GM13976 (cell line): ENCODE measurements at regions of chr10 and their contacts with region 1.

Region 1: GRCh38 chr10:72331601-72332422 is 22.9 kb downstream of the DNAJB12 start:
- DNase-seq: peak; percentile 69
- CTCF ChIP-seq: no peak

Region 2: GRCh38 chr10:72058989-72059842 is 272.6 kb before region 1 on chr10:
- in situ Hi-C with region 1: loop called (anchors 10 kb)
- DNase-seq: no peak
- CTCF ChIP-seq: no peak

Region 3: DNA sequence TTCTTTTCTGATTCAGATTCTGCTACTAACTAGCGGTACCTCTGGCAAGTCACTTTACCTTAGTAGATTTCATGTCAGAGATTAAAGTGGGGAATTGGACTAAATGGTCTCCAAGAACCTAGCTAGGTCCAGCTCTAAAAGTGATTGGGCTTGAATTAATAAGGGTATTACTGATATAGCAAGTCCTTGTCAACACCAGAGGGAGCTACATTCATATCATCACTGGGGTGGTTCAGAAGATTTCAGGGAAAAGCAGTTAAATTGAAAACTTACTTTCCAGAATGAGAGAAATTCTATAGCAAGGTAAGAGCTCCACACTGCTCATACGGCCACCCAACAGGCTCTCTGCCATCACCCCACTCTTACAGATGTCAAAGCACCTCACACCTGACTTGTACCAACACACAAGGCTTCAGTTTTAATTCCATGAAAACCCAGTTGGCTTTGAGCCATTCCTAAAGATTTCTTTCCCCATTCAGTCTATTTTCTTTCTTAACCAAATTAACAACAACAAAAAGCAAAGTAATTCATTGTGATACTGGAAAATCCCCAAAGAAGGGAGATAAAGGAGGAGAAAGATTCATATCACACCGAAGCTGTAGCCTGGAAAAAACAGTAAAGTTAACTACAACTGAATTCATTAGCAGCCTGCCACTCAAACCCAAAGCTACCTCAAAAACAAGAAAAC is 205.5 kb before region 1 on chr10:
- in situ Hi-C with region 1: loop called (anchors 10 kb)
- DNase-seq: peak; percentile 39
- CTCF ChIP-seq: no peak

Region 4: GRCh38 chr10:72223743-72224101 is 108.1 kb before region 1 on chr10:
- in situ Hi-C with region 1: loop called (anchors 10 kb)
- DNase-seq: no peak
- CTCF ChIP-seq: no peak

Region 5: GRCh38 chr10:72273410-72274212 is 58.2 kb before region 1 on chr10 and contains the start of gene DDIT4:
- in situ Hi-C with region 1: loop called (anchors 10 kb)
- DNase-seq: peak; percentile 100
- CTCF ChIP-seq: no peak

Region 6: DNA sequence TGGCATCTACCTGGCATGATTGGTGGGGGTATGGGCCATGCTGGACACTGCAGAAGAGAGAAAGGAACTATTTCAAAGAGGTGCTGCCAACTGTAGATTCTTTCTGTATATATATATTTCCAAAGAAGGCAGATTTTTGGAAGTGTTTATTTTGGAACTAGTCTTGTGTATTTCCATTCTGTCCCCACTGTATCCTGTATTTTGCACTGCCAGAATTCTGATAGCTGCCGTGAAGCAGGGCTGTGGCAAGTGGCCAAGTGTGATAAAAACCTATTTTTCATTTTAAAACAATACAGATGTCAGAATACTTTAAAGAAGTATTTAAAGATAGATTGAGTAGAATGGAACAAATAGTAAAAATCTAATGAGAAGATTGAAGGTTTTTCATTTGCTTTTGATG is 377.2 kb after region 1 on chr10:
- in situ Hi-C with region 1: no loop called
- DNase-seq: no peak
- CTCF ChIP-seq: no peak